OCI-LY7 (cell line): ENCODE measurements at regions of chr5 and their contacts with region 1.

Region 1: GRCh38 chr5:132251220-132251725 is 6.2 kb upstream of the PDLIM4 start:
- DNase-seq: no peak
- H3K4me3 ChIP-seq: no peak overlapping the region
- H3K27ac ChIP-seq: no peak overlapping the region
- H3K4me1 ChIP-seq: no peaks in the 10 kb centered on the region
- CTCF ChIP-seq: no peak

Region 2: DNA sequence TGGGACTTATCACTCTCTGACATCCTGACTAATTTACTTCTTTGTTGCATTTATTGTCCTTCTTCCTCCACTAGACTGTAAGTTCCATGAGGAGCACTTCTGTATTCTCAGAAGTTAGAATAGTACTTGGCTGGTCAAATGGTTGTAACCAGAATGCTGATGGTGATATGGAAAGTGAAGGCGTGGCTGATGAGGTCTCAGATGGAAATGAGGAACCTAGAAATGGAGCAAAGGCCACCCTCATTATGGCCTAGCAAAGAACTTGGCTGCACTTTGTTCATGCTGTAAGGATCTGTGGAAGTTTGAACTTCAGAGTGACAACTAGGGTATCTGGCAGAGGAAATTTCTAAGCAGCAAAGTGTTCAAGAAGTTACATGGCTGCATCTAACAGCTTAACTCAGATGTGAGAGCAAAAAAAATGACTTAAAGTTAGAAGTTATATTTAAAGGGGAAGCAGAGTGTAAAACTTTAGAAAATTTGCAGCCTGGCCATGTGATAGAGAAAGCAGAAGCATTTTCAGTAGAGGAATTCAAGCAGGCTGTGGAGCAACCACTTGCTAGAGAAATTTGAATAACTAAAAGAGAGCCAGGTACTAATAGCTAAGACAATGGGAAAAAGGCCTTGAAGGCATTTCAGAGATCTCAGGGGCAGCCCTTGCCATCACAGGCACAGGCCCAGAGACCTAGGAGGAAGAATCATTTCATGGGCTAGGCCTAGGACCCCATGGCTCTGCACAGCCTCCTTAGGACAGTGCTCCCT is 103.3 kb after region 1 on chr5:
- CTCF ChIA-PET with region 1: no interaction called
- POLR2A ChIA-PET with region 1: interaction called, 12 read pairs
- intact Hi-C with region 1: no loop called
- DNase-seq: no peak
- H3K4me3 ChIP-seq: no peak overlapping the region
- H3K27ac ChIP-seq: no peak overlapping the region
- H3K4me1 ChIP-seq: peaks cover 15% of the 10 kb centered on the region
- CTCF ChIP-seq: no peak

Region 3: GRCh38 chr5:132612846-132613245 is 361.6 kb after region 1 on chr5:
- CTCF ChIA-PET with region 1: no interaction called
- POLR2A ChIA-PET with region 1: no interaction called
- intact Hi-C with region 1: no loop called
- DNase-seq: no peak
- H3K4me3 ChIP-seq: no peak overlapping the region
- H3K27ac ChIP-seq: no peak overlapping the region
- H3K4me1 ChIP-seq: no peaks in the 10 kb centered on the region
- CTCF ChIP-seq: no peak